ENCODE measurements at regions of chr10 and their contacts with region 1.

Region 1: DNA sequence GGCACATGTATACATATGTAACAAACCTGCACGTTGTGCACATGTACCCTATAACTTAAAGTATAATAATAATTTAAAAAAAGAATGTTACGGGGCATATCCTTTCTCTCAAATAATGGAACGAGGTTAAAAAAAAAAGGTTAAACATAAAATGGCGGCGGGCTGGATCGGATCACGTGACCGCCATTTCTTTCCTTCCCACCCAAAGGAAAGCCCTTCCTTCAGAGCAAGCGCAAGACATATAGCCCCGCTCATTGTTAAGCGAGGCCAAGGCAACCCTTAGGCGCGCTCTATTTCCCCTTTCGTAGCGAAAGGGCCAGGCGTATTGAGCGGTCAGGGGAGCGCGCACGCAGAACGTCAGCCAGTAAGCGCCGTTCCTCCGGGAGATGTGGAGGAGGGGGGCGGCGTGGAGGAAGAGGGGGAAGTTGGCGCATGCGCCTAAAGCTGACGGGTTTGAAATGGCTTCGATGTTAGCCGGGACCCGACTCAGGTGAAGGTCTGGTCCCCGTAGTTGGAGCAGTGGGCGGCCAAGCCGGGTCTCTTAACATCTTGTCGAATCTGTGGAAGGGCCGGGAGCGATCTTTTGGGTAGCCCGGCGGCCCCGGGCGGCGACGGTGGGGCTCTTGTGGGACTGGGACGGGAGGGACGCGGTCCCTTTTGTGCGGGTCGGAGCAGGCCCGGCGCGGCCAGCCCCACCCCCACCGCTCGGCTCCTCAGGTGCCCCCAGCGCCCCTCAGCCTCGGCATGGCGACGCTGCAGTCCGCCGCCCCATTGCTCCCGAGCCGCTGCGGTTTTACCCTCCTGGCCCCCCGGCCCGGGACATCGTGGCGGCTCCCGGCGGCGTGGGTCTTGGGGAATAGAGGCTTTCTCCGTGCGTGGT is at the start of gene CCAR1:
- DNase-seq: peak; percentile 93
- ATAC-seq: peak; percentile 98
- H3K4me3 Mint-ChIP-seq: peak within 1 kb of the TSS; percentile 92
- H3K27ac Mint-ChIP-seq: peak within 1 kb of the TSS; percentile 98
- H3K4me1 Mint-ChIP-seq: peaks cover 14% of the 10 kb centered on the region
- H3K27me3 Mint-ChIP-seq: no peaks in the 10 kb centered on the region
- CTCF ChIP-seq: no peak
- total RNA-seq, gene CCAR1: 88.2 and 98.8 TPM in 2 replicates

Region 2: DNA sequence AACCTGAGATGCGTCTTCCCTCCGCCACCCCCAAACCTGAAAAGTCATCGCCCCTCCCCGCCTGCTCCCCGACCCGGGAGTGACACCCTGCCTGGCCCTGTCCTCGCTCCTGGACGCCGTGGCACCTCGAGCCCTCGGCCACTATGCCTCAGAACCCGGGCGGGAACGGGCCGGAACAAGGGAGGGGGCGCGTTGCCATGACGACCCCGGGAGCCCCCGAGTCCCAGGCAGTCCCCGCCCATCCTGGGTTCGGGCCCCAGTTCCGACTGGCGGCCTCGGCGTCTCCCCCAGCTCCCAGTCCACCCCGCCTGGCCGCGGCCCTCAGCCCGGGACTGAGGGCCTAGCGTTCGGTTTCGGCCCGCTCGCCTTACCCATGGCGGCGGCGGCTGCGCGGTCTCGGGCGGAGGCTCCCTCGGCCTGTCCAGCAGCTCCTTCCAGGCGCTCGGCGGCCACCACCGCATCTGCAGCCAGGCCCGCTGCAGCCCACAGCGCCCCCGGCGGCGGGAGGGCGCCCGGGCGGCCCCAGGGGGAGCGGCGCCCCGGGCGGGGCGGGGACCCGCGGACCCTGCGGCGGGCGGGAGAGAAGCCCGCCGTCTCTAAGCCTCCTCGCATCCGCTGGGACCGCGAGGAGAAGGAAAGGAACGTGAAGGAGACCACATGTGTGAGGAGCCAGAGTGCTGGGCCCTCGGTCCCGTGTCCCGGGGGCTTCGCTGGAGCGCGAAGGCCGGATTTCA is 314.1 kb before region 1 on chr10 and contains the start of gene RUFY2:
- CTCF ChIA-PET with region 1: no interaction called
- POLR2A ChIA-PET with region 1: interaction called, 4 read pairs
- intact Hi-C with region 1: loop called (anchors 1 kb)
- DNase-seq: peak; percentile 91
- ATAC-seq: peak; percentile 92
- H3K4me3 Mint-ChIP-seq: peak within 1 kb of the TSS; percentile 92
- H3K27ac Mint-ChIP-seq: peak within 1 kb of the TSS; percentile 85
- H3K4me1 Mint-ChIP-seq: peaks cover 15% of the 10 kb centered on the region
- H3K27me3 Mint-ChIP-seq: no peaks in the 10 kb centered on the region
- CTCF ChIP-seq: no peak
- total RNA-seq, gene RUFY2: 23.1 and 28.5 TPM in 2 replicates

Region 3: DNA sequence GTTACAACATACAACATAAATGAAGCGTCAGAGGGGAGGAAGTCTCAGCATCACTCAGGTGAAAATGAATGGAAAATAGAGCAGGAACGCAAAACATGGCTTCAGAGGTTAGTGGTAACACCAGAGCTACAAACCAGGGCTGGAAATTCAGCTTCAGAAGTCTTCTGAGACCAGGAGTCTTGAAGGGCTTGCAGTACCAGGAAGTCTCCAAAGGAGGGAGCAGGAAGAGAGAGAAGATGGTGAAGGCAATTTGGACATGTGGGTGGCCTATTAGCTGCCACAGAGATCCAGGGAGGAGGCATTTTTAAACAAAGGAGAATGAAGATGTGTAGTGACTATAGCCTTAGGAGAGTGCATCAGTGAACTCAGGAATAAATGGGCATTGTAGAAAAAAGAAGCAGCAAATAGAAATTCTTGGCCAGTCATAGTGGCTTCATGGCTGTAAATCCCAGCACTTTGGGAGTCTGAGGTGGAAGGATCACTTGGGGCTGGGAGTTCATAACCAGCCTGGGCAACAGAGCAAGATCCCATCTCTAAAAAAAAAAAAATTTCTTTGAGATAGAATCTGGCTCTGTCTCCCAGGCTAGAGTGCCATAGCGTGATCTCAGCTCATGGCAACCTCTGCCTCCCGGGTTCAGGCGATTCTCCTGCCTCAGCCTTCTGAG is 170.2 kb before region 1 on chr10:
- CTCF ChIA-PET with region 1: no interaction called
- POLR2A ChIA-PET with region 1: no interaction called
- intact Hi-C with region 1: loop called (anchors 1 kb)
- DNase-seq: no peak
- ATAC-seq: peak; percentile 75
- H3K4me3 Mint-ChIP-seq: no peak overlapping the region
- H3K27ac Mint-ChIP-seq: no peak overlapping the region
- H3K4me1 Mint-ChIP-seq: no peaks in the 10 kb centered on the region
- H3K27me3 Mint-ChIP-seq: peaks cover 4% of the 10 kb centered on the region
- CTCF ChIP-seq: no peak

Region 4: DNA sequence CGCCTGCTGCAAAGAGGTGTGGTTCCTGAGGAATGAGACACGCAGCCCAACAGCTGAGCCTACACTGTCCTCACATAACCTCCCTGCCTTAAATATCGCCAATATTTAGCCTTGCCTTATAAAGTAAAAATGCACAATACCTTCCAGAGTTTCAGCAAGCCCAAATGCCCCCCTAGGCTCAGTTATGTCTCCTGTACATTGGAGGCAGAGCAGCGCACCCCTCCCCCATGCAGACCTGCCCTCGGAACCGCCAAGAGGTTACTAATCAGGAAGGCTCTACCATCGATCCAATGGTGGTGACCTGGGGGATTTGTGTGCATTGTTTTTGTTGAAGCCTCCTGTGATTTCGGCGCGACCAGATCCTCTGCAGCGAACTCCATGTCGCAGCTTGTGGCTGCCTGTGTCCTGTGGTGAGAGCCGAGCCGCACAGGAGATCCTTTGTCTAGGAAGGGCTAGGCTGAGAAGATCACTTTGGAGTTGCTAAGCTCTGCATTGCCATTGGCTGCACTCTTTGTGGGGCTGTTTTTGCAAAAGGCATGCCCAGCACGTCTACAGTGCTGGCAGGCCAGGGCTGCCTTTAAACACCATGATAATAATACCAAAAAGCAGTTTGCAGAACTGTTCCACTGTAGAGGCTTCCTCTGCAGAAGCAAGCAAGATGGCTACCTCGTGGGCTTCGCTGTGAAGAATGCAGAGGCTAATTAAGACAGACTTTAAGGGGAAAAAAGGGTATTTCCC is 120.8 kb before region 1 on chr10:
- CTCF ChIA-PET with region 1: no interaction called
- POLR2A ChIA-PET with region 1: interaction called, 7 read pairs
- intact Hi-C with region 1: loop called (anchors 1 kb)
- DNase-seq: peak; percentile 31
- ATAC-seq: peak; percentile 79
- H3K4me3 Mint-ChIP-seq: peak overlapping the region; percentile 90
- H3K27ac Mint-ChIP-seq: peak overlapping the region; percentile 83
- H3K4me1 Mint-ChIP-seq: peaks cover 24% of the 10 kb centered on the region
- H3K27me3 Mint-ChIP-seq: no peaks in the 10 kb centered on the region
- CTCF ChIP-seq: no peak

Region 5: GRCh38 chr10:68790476-68790875 is 69.4 kb after region 1 on chr10:
- CTCF ChIA-PET with region 1: no interaction called
- POLR2A ChIA-PET with region 1: no interaction called
- intact Hi-C with region 1: no loop called
- DNase-seq: no peak
- ATAC-seq: no peak
- H3K4me3 Mint-ChIP-seq: no peak overlapping the region
- H3K27ac Mint-ChIP-seq: no peak overlapping the region
- H3K4me1 Mint-ChIP-seq: no peaks in the 10 kb centered on the region
- H3K27me3 Mint-ChIP-seq: no peaks in the 10 kb centered on the region
- CTCF ChIP-seq: no peak

Region 6: GRCh38 chr10:68848793-68849192 is 127.8 kb after region 1 on chr10:
- CTCF ChIA-PET with region 1: no interaction called
- POLR2A ChIA-PET with region 1: no interaction called
- intact Hi-C with region 1: no loop called
- DNase-seq: no peak
- ATAC-seq: no peak
- H3K4me3 Mint-ChIP-seq: no peak overlapping the region
- H3K27ac Mint-ChIP-seq: no peak overlapping the region
- H3K4me1 Mint-ChIP-seq: no peaks in the 10 kb centered on the region
- H3K27me3 Mint-ChIP-seq: no peaks in the 10 kb centered on the region
- CTCF ChIP-seq: no peak

Region 7: DNA sequence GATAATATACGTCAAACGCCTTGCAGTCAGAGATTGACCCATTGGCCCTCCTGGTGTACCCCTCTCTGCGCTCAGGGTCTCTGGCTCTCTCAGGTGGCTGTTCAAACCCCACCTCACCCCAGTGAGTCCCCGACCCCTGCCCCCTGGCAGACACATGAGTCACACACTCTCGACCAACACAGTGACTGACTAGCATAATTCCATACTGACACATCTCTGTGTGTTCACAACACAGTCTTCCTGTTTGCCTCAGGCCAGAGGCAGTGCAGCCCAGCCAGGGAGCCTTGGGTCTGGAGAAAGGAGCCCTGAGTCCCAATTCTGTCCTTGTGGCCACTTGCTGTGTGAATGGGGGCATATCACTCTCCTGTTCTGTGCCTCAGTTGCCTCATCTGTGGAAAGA is 1797.7 kb after region 1 on chr10:
- CTCF ChIA-PET with region 1: no interaction called
- POLR2A ChIA-PET with region 1: no interaction called
- intact Hi-C with region 1: no loop called
- DNase-seq: no peak
- ATAC-seq: no peak
- H3K4me3 Mint-ChIP-seq: no peak overlapping the region
- H3K27ac Mint-ChIP-seq: no peak overlapping the region
- H3K4me1 Mint-ChIP-seq: peaks cover 13% of the 10 kb centered on the region
- H3K27me3 Mint-ChIP-seq: no peaks in the 10 kb centered on the region
- CTCF ChIP-seq: no peak

Region 8: GRCh38 chr10:70540089-70540788 is 1819.2 kb after region 1 on chr10:
- CTCF ChIA-PET with region 1: no interaction called
- POLR2A ChIA-PET with region 1: no interaction called
- intact Hi-C with region 1: no loop called
- DNase-seq: peak; percentile 33
- ATAC-seq: peak; percentile 47
- H3K4me3 Mint-ChIP-seq: no peak overlapping the region
- H3K27ac Mint-ChIP-seq: no peak overlapping the region
- H3K4me1 Mint-ChIP-seq: no peaks in the 10 kb centered on the region
- H3K27me3 Mint-ChIP-seq: no peaks in the 10 kb centered on the region
- CTCF ChIP-seq: no peak